Body of pancreas (tissue), 4 donors: ENCODE measurements at regions of chr19 and their contacts with region 1.

Region 1: GRCh38 chr19:41439441-41440222 is at the start of gene DMAC2:
- DNase-seq: peak; percentile 98 to 99 (median 98)
- ATAC-seq: peak; percentile 98
- H3K4me3 ChIP-seq: peak within 1 kb of the TSS; percentile 78 to 84
- H3K27ac ChIP-seq: peak within 1 kb of the TSS; percentile 77 to 95 (median 90)
- H3K4me1 ChIP-seq: peaks cover 7% of the 10 kb centered on the region
- H3K27me3 ChIP-seq: no peaks in the 10 kb centered on the region
- CTCF ChIP-seq: peak; percentile 26 to 85 (median 71)
- POLR2A ChIP-seq: peak; percentile 20 to 82 (median 79)
- total RNA-seq, gene DMAC2: 13.5 to 45.5 TPM

Region 2: DNA sequence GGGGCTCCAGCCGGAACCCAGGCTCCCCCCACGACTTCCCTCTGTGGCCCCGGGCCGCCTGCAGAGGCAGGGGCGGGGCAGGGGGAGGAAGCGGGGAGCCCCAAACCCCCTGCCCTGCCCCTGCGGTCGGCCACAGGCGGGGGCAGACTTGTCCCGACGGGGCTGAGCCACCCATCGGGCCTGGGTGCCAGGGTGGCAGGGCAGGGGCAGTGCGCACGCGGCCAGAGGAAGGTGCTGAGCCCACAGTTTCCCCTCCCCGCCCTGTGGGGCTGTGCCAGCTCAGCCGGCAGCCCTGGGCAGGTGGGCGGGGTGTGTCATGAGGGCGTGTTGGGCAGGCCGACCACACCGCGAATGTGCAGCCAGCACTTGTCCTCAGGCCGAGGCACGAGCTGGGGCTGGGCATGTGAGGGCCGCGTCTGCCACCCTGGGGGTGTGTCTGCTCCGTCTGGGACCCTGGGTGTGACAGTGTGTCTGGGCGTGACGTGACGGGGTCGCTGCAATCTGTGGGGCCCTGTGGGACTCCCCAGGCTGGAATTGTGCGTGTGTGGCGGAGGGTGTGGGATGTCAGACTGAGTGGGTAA is 112.0 kb before region 1 on chr19:
- intact Hi-C with region 1: loop called (anchors 10 kb)
- DNase-seq: peak; percentile 76 to 88 (median 86)
- ATAC-seq: peak; percentile 79
- H3K4me3 ChIP-seq: no peak overlapping the region
- H3K27ac ChIP-seq: peak overlapping the region; percentile 32 to 80 (median 70)
- H3K4me1 ChIP-seq: peaks cover 46% of the 10 kb centered on the region
- H3K27me3 ChIP-seq: no peaks in the 10 kb centered on the region
- CTCF ChIP-seq: no peak
- POLR2A ChIP-seq: peak; percentile 24 to 59 (median 39)